Heart left ventricle (tissue), 16 donors: ENCODE measurements at regions of chr1 and their contacts with region 1.

Region 1: GRCh38 chr1:8910914-8911313 is 32.4 kb upstream of the ENO1 start:
- DNase-seq: no peak
- ATAC-seq: no peak
- H3K4me3 ChIP-seq: no peak overlapping the region
- H3K27ac ChIP-seq: no peak overlapping the region
- H3K4me1 ChIP-seq: peaks cover 0 to under 1% (median 0%) of the 10 kb centered on the region in 12 donors
- H3K27me3 ChIP-seq: no peaks in the 10 kb centered on the region
- CTCF ChIP-seq: no peak
- POLR2A ChIP-seq: no peak

Region 2: DNA sequence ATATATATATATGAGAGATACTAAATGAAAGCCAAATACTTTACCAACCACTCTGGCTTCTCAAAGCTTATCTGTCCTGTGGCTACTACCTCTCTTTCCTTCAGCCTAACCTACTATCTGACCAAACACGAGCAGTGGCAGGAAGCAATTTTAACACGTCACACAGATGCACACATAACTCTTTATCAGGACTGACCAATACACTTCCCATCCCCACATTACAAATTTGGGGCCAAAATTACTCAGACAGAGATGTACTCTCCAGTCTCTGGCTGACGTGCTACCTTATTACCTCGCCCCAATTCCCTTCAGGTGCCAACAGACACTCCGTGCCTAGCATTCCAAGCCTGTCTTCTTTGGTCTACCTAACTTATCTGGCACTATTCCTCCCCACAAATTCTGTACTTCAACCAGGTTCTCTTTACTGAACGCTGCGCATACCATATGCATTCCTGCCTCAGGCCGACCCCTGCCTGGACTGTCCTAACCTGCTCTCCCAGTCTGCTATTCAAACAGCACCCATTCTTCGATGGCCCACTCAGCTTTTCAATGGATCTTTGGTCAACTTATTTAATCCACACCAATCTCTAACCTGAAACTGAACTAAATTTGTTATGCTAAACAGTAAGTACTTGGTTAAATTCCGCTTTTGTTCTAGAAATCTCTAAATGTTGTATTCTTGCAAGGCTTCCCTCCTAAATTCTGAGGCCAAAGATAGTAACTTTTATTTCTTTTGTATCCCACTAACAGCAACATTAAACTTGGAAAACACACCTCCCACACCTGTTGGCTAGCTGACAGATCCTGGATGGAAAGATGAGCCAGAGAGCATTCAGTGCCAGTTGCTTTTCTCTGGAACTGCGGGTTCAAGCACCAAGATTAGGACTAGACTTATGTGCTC is 121.3 kb before region 1 on chr1:
- intact Hi-C with region 1: no loop called
- DNase-seq: no peak
- ATAC-seq: no peak
- H3K4me3 ChIP-seq: no peak overlapping the region
- H3K27ac ChIP-seq: no peak overlapping the region
- H3K4me1 ChIP-seq: peaks cover 0 to 9% (median 0%) of the 10 kb centered on the region in 12 donors
- H3K27me3 ChIP-seq: no peaks in the 10 kb centered on the region
- CTCF ChIP-seq: no peak
- POLR2A ChIP-seq: no peak

Region 3: DNA sequence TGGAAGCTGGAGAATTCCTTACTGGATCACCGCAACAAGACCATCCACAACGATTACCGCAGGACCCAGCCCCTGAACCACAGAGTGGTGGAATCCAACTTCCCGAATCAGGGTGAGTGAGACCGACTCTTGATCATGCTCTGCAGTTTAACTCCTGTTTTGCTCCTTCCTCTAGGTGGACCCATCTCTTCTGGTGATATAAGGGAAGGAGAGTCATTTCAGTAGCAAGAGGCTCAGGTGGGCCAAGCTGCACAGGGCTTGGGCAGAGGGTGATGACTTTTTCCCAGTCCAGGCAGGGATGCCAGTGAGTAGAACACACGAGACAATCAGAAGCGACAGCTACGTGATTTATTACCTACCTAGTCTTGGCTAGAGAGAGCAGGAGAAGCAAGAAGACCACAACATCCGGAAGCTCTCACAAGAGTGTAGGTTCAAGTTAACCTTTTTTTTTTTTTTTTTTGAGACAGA is 60.0 kb after region 1 on chr1:
- intact Hi-C with region 1: no loop called
- DNase-seq: no peak
- ATAC-seq: no peak
- H3K4me3 ChIP-seq: peak overlapping the region in 1 of 12 donors; percentile 21
- H3K27ac ChIP-seq: peak overlapping the region in 1 of 12 donors; percentile 27
- H3K4me1 ChIP-seq: no peaks in the 10 kb centered on the region
- H3K27me3 ChIP-seq: no peaks in the 10 kb centered on the region
- CTCF ChIP-seq: no peak
- POLR2A ChIP-seq: no peak

Region 4: GRCh38 chr1:8987881-8988617 is 77.1 kb after region 1 on chr1:
- intact Hi-C with region 1: loop called in 2 of 10 experiments (anchors 2 to 5 kb)
- DNase-seq: peak in 4 of 5 donors; percentile 36 to 52 (median 48)
- ATAC-seq: peak in 3 of 4 donors; percentile 50 to 58 (median 56)
- H3K4me3 ChIP-seq: no peak overlapping the region
- H3K27ac ChIP-seq: peak overlapping the region in 1 of 12 donors; percentile 12
- H3K4me1 ChIP-seq: peaks cover 0 to 25% (median 8%) of the 10 kb centered on the region in 12 donors
- H3K27me3 ChIP-seq: no peaks in the 10 kb centered on the region
- CTCF ChIP-seq: peak; percentile 85 to 97 (median 93)
- POLR2A ChIP-seq: no peak

Region 5: GRCh38 chr1:9004700-9005394 is 93.9 kb after region 1 on chr1:
- intact Hi-C with region 1: loop called in 6 of 10 experiments (anchors 5 kb)
- DNase-seq: peak; percentile 62 to 84 (median 75)
- ATAC-seq: peak; percentile 46 to 92 (median 82)
- H3K4me3 ChIP-seq: no peak overlapping the region
- H3K27ac ChIP-seq: no peak overlapping the region
- H3K4me1 ChIP-seq: peaks cover 0 to 8% (median 0%) of the 10 kb centered on the region in 12 donors
- H3K27me3 ChIP-seq: no peaks in the 10 kb centered on the region
- CTCF ChIP-seq: peak; percentile 90 to 97 (median 93)
- POLR2A ChIP-seq: no peak